Activated T-helper 2 cell treated with anti-CD3 and anti-CD28 coated beads, Interferon-gamma antibody, Interleukin-2, Interleukin-4, amounts not matched to agents 10 μg/mL and 5 μg/mL and 100 μg/mL, durations not matched to agents 14 hours and 24 hours and 36 hours (primary cell): ENCODE measurements at regions of chr19 and their contacts with region 1.

Region 1: GRCh38 chr19:47112997-47113849 is at the start of gene ZC3H4:
- DNase-seq: peak; percentile 100
- H3K4me3 Mint-ChIP-seq: peak within 1 kb of the TSS; percentile 95
- H3K27ac Mint-ChIP-seq: peak within 1 kb of the TSS; percentile 99
- H3K4me1 Mint-ChIP-seq: peaks cover 26% of the 10 kb centered on the region
- H3K27me3 Mint-ChIP-seq: no peaks in the 10 kb centered on the region
- total RNA-seq, gene ZC3H4: 97.1 and 104 TPM in 2 replicates

Region 2: DNA sequence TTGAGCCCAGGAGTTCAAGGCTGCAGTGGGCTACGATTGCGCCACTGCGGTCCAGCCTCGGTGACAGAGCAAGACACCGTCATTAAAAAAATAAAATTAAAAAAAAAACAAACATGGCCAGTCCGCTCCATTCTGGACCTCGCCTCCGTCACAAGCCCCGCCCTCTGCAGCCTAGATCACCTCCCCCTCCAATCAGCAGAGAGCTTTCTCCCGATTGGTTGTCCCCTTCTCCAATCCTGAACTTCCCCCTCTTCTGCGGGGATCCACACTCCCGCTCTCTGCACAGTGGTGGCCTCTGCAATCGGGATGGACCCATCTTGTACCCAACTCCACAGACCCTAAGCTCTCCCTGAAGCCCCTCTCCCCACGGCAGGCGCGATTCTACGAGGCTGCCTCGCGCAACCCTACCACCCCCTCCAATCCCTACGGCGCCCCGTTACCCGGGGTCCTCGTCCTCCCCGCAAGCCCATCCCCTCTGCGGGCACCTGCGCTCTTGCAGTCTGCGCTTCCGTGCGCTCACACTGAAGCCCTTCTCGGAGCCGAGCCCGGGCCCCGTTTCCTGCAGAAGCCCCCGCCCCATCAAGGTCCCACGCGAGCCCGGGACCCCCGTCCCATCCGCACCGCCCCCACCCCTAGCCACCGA is 65.3 kb before region 1 on chr19:
- intact Hi-C with region 1: loop called (anchors 2 kb)
- DNase-seq: peak; percentile 77
- H3K4me3 Mint-ChIP-seq: peak overlapping the region; percentile 87
- H3K27ac Mint-ChIP-seq: peak overlapping the region; percentile 82
- H3K4me1 Mint-ChIP-seq: peaks cover 7% of the 10 kb centered on the region
- H3K27me3 Mint-ChIP-seq: peaks cover 3% of the 10 kb centered on the region

Region 3: GRCh38 chr19:47094557-47095475 is 18.4 kb before region 1 on chr19:
- intact Hi-C with region 1: loop called (anchors 1 kb)
- DNase-seq: peak; percentile 52
- H3K4me3 Mint-ChIP-seq: peak overlapping the region; percentile 95
- H3K27ac Mint-ChIP-seq: peak overlapping the region; percentile 100
- H3K4me1 Mint-ChIP-seq: peaks cover 62% of the 10 kb centered on the region
- H3K27me3 Mint-ChIP-seq: no peaks in the 10 kb centered on the region

Region 4: GRCh38 chr19:47130591-47131227 is 17.5 kb after region 1 on chr19 and contains the start of gene SAE1:
- intact Hi-C with region 1: loop called (anchors 1 kb)
- DNase-seq: peak; percentile 94
- H3K4me3 Mint-ChIP-seq: peak within 1 kb of the TSS; percentile 100
- H3K27ac Mint-ChIP-seq: peak within 1 kb of the TSS; percentile 97
- H3K4me1 Mint-ChIP-seq: peaks cover 43% of the 10 kb centered on the region
- H3K27me3 Mint-ChIP-seq: no peaks in the 10 kb centered on the region
- total RNA-seq, gene SAE1: 151 and 154 TPM in 2 replicates